Activated CD4-positive, alpha-beta T cell treated with anti-CD3 and anti-CD28 coated beads, Interleukin-2, amount 10 ng/mL, durations not matched to agents 7 days and 5 days (primary cell): ENCODE measurements at regions of chr15 and their contacts with region 1.

Region 1: GRCh38 chr15:40893733-40894688 is at the start of gene VPS18:
- DNase-seq: peak; percentile 98
- H3K4me3 Mint-ChIP-seq: peak within 1 kb of the TSS; percentile 100
- H3K27ac Mint-ChIP-seq: peak within 1 kb of the TSS; percentile 99
- H3K4me1 Mint-ChIP-seq: peaks cover 39% of the 10 kb centered on the region
- H3K27me3 Mint-ChIP-seq: peaks cover 4% of the 10 kb centered on the region
- total RNA-seq, gene VPS18: 16.2 to 16.6 TPM

Region 2: GRCh38 chr15:40857601-40858341 is 36.2 kb before region 1 on chr15:
- CTCF ChIA-PET with region 1: interaction called, 165 read pairs
- POLR2A ChIA-PET with region 1: interaction called, 15 read pairs
- DNase-seq: peak; percentile 83
- H3K4me3 Mint-ChIP-seq: no peak overlapping the region
- H3K27ac Mint-ChIP-seq: peak overlapping the region; percentile 39
- H3K4me1 Mint-ChIP-seq: peaks cover 19% of the 10 kb centered on the region
- H3K27me3 Mint-ChIP-seq: peaks cover 5% of the 10 kb centered on the region

Region 3: DNA sequence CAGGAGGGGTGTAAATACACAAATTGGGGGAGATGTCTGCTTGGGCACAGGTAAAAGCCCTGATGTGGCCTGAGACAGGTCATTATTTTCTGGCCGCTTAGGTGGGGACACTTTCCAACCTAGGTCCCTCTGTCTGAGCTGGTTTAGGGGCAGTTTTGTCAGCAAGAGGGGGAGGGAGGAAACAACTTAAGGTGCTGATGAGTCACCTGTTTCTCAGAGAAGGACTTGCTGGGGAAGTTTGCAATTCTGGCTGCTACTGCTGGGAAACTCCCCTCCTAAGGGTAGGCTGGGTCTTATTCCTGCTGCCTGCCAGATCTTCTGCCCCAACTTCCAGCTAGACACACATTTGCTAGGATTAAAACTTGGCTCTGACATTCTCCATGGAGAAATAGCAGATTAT is 15.2 kb before region 1 on chr15:
- CTCF ChIA-PET with region 1: interaction called, 31 read pairs
- POLR2A ChIA-PET with region 1: no interaction called
- DNase-seq: no peak
- H3K4me3 Mint-ChIP-seq: no peak overlapping the region
- H3K27ac Mint-ChIP-seq: no peak overlapping the region
- H3K4me1 Mint-ChIP-seq: peaks cover 19% of the 10 kb centered on the region
- H3K27me3 Mint-ChIP-seq: peaks cover 13% of the 10 kb centered on the region

Region 4: GRCh38 chr15:40941528-40942336 is 47.7 kb after region 1 on chr15:
- CTCF ChIA-PET with region 1: interaction called, 17 read pairs
- POLR2A ChIA-PET with region 1: no interaction called
- DNase-seq: peak; percentile 73
- H3K4me3 Mint-ChIP-seq: peak overlapping the region; percentile 77
- H3K27ac Mint-ChIP-seq: peak overlapping the region; percentile 41
- H3K4me1 Mint-ChIP-seq: peaks cover 55% of the 10 kb centered on the region
- H3K27me3 Mint-ChIP-seq: no peaks in the 10 kb centered on the region

Region 5: DNA sequence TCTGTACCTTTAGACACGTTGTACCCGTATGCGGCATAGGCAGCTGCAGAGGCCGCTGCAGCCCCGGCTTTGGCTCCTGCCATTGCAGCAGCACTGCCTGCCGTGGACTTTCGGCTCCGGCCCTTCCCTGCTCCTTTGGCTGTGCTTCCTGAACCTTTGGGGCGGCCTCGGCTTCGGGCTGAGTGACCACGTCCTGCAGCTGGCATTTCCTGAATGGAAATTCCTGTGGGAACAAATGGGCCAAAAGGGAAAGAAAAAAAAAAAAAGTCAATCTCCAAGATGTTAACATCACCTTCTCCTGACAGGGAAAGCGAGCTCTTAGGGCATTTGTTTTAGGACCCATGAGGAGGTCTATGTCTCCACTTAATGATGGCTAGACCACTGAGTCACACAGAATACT is 88.8 kb after region 1 on chr15:
- CTCF ChIA-PET with region 1: no interaction called
- POLR2A ChIA-PET with region 1: no interaction called
- DNase-seq: no peak
- H3K4me3 Mint-ChIP-seq: no peak overlapping the region
- H3K27ac Mint-ChIP-seq: no peak overlapping the region
- H3K4me1 Mint-ChIP-seq: peaks cover 5% of the 10 kb centered on the region
- H3K27me3 Mint-ChIP-seq: no peaks in the 10 kb centered on the region

Region 6: GRCh38 chr15:41011055-41011815 is 117.2 kb after region 1 on chr15:
- CTCF ChIA-PET with region 1: no interaction called
- POLR2A ChIA-PET with region 1: no interaction called
- DNase-seq: no peak
- H3K4me3 Mint-ChIP-seq: no peak overlapping the region
- H3K27ac Mint-ChIP-seq: no peak overlapping the region
- H3K4me1 Mint-ChIP-seq: no peaks in the 10 kb centered on the region
- H3K27me3 Mint-ChIP-seq: no peaks in the 10 kb centered on the region